ENCODE measurements at regions of chr2 and their contacts with region 1.

Region 1: GRCh38 chr2:102240640-102241370 is 54.0 kb downstream of the IL1RL2 start:
- DNase-seq: peak; percentile 83 to 93
- H3K4me3 ChIP-seq: no peak overlapping the region
- H3K27ac ChIP-seq: peak overlapping the region; percentile 39
- H3K4me1 ChIP-seq: peaks cover 16% of the 10 kb centered on the region
- H3K27me3 ChIP-seq: no peaks in the 10 kb centered on the region
- CTCF ChIP-seq: peak; percentile 97

Region 2: GRCh38 chr2:101883863-101884262 is 356.9 kb before region 1 on chr2:
- CTCF ChIA-PET with region 1: interaction called, 18 read pairs
- POLR2A ChIA-PET with region 1: no interaction called
- intact Hi-C with region 1: loop called (anchors 1 kb)
- DNase-seq: peak; percentile 7 to 41
- H3K4me3 ChIP-seq: no peak overlapping the region
- H3K27ac ChIP-seq: no peak overlapping the region
- H3K4me1 ChIP-seq: peaks cover 9% of the 10 kb centered on the region; the same call in 1 of the 2 replicates
- H3K27me3 ChIP-seq: no peaks in the 10 kb centered on the region
- CTCF ChIP-seq: peak; percentile 74

Region 3: DNA sequence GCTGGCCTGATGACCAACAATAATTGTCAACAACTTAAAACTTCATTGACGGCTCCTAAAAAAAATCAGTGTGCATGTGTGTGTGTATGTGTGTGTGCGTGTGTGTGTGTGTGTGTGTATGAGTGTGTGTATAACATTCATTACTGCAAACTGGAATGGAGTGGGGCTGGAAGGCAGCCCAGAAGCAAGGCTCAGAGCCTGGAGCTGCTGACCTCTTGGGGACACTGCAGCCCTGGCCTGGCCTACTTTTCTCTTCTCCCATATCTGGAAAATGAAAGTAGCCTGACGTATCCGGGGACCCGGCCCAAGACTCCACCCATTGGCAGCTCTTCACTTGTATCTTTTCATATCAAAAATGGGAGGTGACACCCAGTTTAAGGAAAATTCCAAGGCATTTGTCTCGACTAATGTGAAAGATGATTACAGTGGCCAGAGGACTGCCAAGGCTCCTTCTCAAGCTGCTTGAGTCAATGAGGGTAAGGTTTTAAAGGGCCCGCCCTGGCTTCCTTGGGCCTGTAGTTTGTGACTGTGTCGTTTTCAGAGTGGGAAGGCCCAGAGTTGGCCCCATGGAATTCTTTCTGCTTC is 170.7 kb before region 1 on chr2:
- CTCF ChIA-PET with region 1: interaction called, 4 read pairs
- POLR2A ChIA-PET with region 1: no interaction called
- intact Hi-C with region 1: loop called (anchors 2 kb)
- DNase-seq: peak in 1 of 2 experiments; percentile 77
- H3K4me3 ChIP-seq: no peak overlapping the region
- H3K27ac ChIP-seq: no peak overlapping the region
- H3K4me1 ChIP-seq: peaks cover 15% of the 10 kb centered on the region
- H3K27me3 ChIP-seq: no peaks in the 10 kb centered on the region
- CTCF ChIP-seq: no peak

Region 4: GRCh38 chr2:102166189-102166845 is 74.5 kb before region 1 on chr2:
- CTCF ChIA-PET with region 1: interaction called, 13 read pairs
- POLR2A ChIA-PET with region 1: no interaction called
- intact Hi-C with region 1: loop called (anchors 5 kb)
- DNase-seq: no peak
- H3K4me3 ChIP-seq: no peak overlapping the region
- H3K27ac ChIP-seq: no peak overlapping the region
- H3K4me1 ChIP-seq: peaks cover 17% of the 10 kb centered on the region
- H3K27me3 ChIP-seq: no peaks in the 10 kb centered on the region
- CTCF ChIP-seq: peak; percentile 60

Region 5: GRCh38 chr2:102449370-102449974 is 208.7 kb after region 1 on chr2:
- CTCF ChIA-PET with region 1: no interaction called
- POLR2A ChIA-PET with region 1: no interaction called
- intact Hi-C with region 1: loop called (anchors 5 kb)
- DNase-seq: peak in 1 of 2 experiments; percentile 41
- H3K4me3 ChIP-seq: no peak overlapping the region
- H3K27ac ChIP-seq: no peak overlapping the region
- H3K4me1 ChIP-seq: no peaks in the 10 kb centered on the region
- H3K27me3 ChIP-seq: no peaks in the 10 kb centered on the region
- CTCF ChIP-seq: peak; percentile 83

Region 6: DNA sequence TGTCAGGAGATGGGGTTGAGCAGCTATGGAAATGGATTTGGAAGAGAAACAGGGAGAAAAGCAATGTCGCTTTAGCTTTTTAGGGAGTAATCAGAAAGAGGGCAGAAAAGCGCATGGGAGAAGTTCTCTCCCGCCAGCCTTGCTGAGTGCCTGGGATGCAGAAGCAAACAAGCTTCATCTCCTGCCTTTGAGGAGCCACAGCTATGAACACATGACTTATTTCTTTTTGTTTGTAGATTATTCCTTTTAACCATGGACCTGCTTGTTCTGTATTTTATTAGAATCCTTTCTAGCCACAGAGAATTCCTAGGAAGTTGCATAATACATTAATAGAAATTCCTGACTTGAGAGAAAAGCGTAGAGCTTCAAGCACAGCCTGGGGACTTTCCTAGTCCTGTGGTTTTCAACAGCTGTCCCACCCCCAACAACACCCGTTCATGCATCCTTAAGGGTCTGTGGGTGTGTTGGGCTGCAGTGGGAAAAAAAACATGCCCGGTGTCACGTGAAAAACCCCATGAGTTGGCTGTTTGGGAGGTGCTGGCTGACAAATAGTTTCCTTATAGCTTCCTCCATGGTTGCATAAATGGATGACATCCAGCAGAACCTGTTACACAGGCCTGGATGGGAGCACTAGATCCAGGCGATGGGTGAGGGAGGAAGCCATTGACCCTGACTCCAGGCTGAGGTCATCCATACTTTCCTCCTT is 247.1 kb after region 1 on chr2:
- CTCF ChIA-PET with region 1: no interaction called
- POLR2A ChIA-PET with region 1: no interaction called
- intact Hi-C with region 1: no loop called
- DNase-seq: peak; percentile 87 to 99
- H3K4me3 ChIP-seq: peak overlapping the region; percentile 3; the same call in 1 of the 2 replicates
- H3K27ac ChIP-seq: peak overlapping the region; percentile 91
- H3K4me1 ChIP-seq: peaks cover 38% of the 10 kb centered on the region
- H3K27me3 ChIP-seq: no peaks in the 10 kb centered on the region
- CTCF ChIP-seq: no peak

Measured in PC-9 (cell line).